Ovary (tissue), 10 donors: ENCODE measurements at regions of chr17 and their contacts with region 1.

Region 1: DNA sequence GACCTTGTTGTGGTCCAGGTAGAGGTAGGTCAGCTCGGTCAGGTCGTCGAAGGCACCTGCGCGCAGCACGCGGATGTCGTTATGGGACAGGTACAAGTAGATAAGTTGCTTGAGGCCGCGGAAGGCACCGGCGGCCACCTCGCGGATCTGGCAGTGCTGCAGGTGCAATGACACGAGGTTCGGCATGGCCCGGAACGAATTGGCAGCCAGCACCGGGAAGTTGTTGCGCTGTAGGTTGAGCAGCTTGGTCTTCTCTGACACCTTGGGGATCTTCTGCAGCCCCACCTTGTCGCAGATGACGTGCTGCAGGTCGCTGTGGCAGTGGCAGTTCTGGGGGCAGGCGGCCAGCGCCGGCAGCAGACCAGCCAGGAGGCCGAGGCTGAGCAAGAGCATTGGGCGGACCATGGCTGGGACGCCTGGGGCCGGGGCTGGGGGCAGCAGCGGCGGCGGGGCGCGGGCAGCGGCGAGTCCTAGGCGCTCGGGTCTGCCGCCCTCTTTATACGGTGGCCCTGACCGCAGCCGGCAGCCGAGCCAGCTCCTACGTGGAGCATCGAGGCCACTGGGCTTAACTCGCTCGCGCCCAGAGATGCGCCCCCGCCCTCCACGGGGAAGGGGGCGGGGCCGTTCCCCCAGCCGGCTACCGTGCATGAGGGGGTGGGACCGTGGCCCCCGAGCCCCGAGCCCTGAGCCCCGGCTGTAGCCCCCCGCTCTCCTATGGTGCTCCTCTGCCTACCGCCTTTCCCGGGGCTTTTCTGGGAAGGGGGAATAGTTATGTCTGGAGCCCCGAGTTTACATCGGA is at the start of gene CHAD:
- DNase-seq: peak in 2 of 5 donors; percentile 51 to 66
- H3K4me3 ChIP-seq: peak within 1 kb of the TSS; percentile 24
- H3K27ac ChIP-seq: no peak within 1 kb of the TSS
- H3K4me1 ChIP-seq: peaks cover 4% of the 10 kb centered on the region
- H3K27me3 ChIP-seq: no peaks in the 10 kb centered on the region
- CTCF ChIP-seq: no peak
- EP300 ChIP-seq: no peak
- POLR2A ChIP-seq: no peak
- total RNA-seq, gene CHAD: 0.18 to 0.92 (median 0.46) TPM in 6 of 7 donors, not detected in the other

Region 2: GRCh38 chr17:50361561-50362480 is 106.8 kb before region 1 on chr17:
- intact Hi-C with region 1: loop called in 1 of 4 experiments (anchors 5 kb)
- DNase-seq: peak in 2 of 5 donors; percentile 54 to 59
- H3K4me3 ChIP-seq: no peak overlapping the region
- H3K27ac ChIP-seq: peak overlapping the region in 1 of 2 donors; percentile 19
- H3K4me1 ChIP-seq: no peaks in the 10 kb centered on the region
- H3K27me3 ChIP-seq: no peaks in the 10 kb centered on the region
- CTCF ChIP-seq: peak; percentile 14 to 49 (median 42)
- EP300 ChIP-seq: no peak
- POLR2A ChIP-seq: no peak

Region 3: GRCh38 chr17:50425682-50426471 is 42.7 kb before region 1 on chr17 and contains the start of gene ACSF2:
- intact Hi-C with region 1: loop called in 1 of 4 experiments (anchors 5 kb)
- DNase-seq: peak; percentile 73 to 82 (median 77)
- H3K4me3 ChIP-seq: peak within 1 kb of the TSS; percentile 56
- H3K27ac ChIP-seq: peak within 1 kb of the TSS; percentile 56 to 85
- H3K4me1 ChIP-seq: peaks cover 21% of the 10 kb centered on the region
- H3K27me3 ChIP-seq: no peaks in the 10 kb centered on the region
- CTCF ChIP-seq: no peak
- EP300 ChIP-seq: no peak
- POLR2A ChIP-seq: no peak
- total RNA-seq, gene ACSF2: 26.7 to 86.0 (median 49.5) TPM

Region 4: GRCh38 chr17:50596191-50597037 is 127.8 kb after region 1 on chr17:
- intact Hi-C with region 1: no loop called
- DNase-seq: no peak
- H3K4me3 ChIP-seq: no peak overlapping the region
- H3K27ac ChIP-seq: no peak overlapping the region
- H3K4me1 ChIP-seq: no peaks in the 10 kb centered on the region
- H3K27me3 ChIP-seq: no peaks in the 10 kb centered on the region
- CTCF ChIP-seq: no peak
- EP300 ChIP-seq: no peak
- POLR2A ChIP-seq: no peak